H1 (cell line): ENCODE measurements at regions of chr17 and their contacts with region 1.

Region 1: GRCh38 chr17:80279895-80280294 is 19.2 kb downstream of the RNF213 start:
- DNase-seq: no peak
- H3K4me3 ChIP-seq: no peak overlapping the region
- H3K27ac ChIP-seq: no peak overlapping the region
- H3K4me1 ChIP-seq: peaks cover 0 to 6% (median 3%) of the 10 kb centered on the region in 4 experiments; a peak in 4 of 7 replicates
- H3K27me3 ChIP-seq: no peaks in the 10 kb centered on the region
- CTCF ChIP-seq: no peak
- EP300 ChIP-seq: no peak
- POLR2A ChIP-seq: no peak
- RAD21 ChIP-seq: no peak

Region 2: GRCh38 chr17:80124351-80124981 is 155.4 kb before region 1 on chr17:
- CTCF ChIA-PET with region 1: no interaction called
- POLR2A ChIA-PET with region 1: no interaction called
- DNase-seq: peak; percentile 51 to 71
- H3K4me3 ChIP-seq: peak overlapping the region in 3 of 4 experiments; percentile 29 to 35 (median 31); a peak in 5 of 8 replicates
- H3K27ac ChIP-seq: peak overlapping the region; percentile 68
- H3K4me1 ChIP-seq: peaks cover 3 to 18% (median 12%) of the 10 kb centered on the region in 4 experiments
- H3K27me3 ChIP-seq: no peaks in the 10 kb centered on the region
- CTCF ChIP-seq: peak; percentile 70 to 82 (median 82)
- EP300 ChIP-seq: 0 out of 3 replicates have a peak, but pooled peaks of 1 of the 2 experiments have one; percentile 15
- POLR2A ChIP-seq: peak in 1 of 2 experiments; percentile 65; a peak in 2 of 3 replicates
- RAD21 ChIP-seq: peak; percentile 58 to 70

Region 3: GRCh38 chr17:80263253-80264204 is 16.4 kb before region 1 on chr17:
- CTCF ChIA-PET with region 1: interaction called, 7 read pairs
- POLR2A ChIA-PET with region 1: interaction called, 63 read pairs
- DNase-seq: peak in 1 of 2 experiments; percentile 51
- H3K4me3 ChIP-seq: no peak overlapping the region
- H3K27ac ChIP-seq: no peak overlapping the region; the same call in 1 of the 2 replicates
- H3K4me1 ChIP-seq: peaks cover 12 to 20% (median 15%) of the 10 kb centered on the region in 4 experiments
- H3K27me3 ChIP-seq: no peaks in the 10 kb centered on the region
- CTCF ChIP-seq: no peak
- EP300 ChIP-seq: no peak
- POLR2A ChIP-seq: no peak
- RAD21 ChIP-seq: no peak